Ascending aorta (tissue), 2 donors: ENCODE measurements at regions of chr13 and their contacts with region 1.

Region 1: GRCh38 chr13:32310134-32310706 is 4.9 kb downstream of the ZAR1L start:
- DNase-seq: no peak
- H3K4me3 ChIP-seq: peak overlapping the region; percentile 28 to 63
- H3K27ac ChIP-seq: peak overlapping the region; percentile 3 to 45
- H3K4me1 ChIP-seq: peaks cover 0 to 5% of the 10 kb centered on the region in 2 donors
- H3K27me3 ChIP-seq: no peaks in the 10 kb centered on the region
- CTCF ChIP-seq: peak; percentile 68 to 73 (median 71)

Region 2: DNA sequence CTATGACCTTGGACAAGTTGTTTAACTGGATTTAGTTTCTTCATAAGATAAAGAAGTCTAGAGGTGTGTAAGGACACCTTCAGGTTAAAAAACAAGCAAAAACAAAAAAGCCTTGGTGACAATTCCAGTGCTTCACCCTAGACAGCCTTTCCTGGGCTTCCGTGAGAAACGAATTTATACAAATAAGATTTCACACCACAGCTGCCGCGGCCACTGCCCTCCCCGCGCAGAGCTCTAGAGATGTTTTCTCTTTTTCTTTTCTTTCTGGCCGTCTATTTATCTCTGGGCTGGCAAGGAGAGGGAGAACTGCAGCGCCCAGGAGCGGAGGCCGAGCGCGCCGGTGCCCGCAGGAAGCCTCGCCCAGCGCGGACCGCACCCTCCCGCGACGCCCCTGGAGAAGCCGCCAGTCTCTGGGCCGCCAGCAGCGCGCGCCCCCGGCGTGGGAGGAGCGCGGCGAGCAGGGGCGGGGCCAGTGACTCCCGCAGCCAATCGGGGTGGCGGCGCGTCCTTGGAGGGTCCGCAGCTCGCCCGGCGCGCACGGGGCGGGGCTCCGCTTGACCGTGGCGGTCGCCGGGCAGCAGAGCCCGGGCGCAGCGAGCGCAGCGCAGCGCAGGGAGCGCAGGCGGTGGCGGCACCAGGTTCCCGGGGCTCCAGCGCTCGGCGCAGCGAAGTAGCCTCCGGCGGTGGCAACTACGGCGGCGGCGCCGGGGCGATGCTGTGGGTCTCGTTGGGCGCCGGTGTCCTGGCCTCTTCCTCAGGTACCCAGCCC is 463.9 kb before region 1 on chr13:
- intact Hi-C with region 1: loop called (anchors 5 kb)
- DNase-seq: peak; percentile 60 to 94
- H3K4me3 ChIP-seq: peak overlapping the region; percentile 65 to 97
- H3K27ac ChIP-seq: peak overlapping the region; percentile 89 to 93
- H3K4me1 ChIP-seq: peaks cover 0 to 2% of the 10 kb centered on the region in 2 donors
- H3K27me3 ChIP-seq: no peaks in the 10 kb centered on the region
- CTCF ChIP-seq: no peak

Region 3: DNA sequence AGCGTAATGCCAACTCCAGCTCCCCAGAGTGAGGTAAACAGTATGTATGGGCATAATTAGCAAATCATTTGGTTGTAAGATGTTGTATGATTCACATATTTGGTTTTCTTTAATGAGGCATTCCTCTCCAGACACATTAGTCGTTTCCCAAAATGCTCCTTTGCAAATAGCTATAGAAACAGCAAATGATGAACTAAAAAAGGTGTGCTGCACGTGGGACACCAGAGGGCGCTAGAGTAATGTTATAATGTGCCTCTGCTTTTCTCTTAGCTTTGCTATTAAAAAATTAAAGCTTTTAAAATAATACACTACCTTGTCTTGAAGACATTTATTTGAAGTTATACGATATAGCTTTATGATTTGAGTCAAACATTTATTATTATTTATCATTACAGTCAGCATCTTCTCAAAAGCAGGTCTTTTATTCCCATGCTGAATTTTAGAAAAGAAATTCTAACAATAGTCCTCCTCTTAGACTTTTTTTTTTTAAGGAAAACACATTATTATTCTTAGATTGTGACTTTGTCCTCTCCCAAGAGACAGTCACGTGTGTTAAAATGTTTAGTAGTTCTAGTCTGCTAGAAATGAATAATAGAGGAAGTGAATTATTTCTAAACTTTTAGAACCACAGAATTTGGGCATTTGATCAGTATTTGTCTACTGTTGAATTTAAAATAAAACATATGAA is 400.2 kb before region 1 on chr13:
- intact Hi-C with region 1: loop called (anchors 2 kb)
- DNase-seq: no peak
- H3K4me3 ChIP-seq: no peak overlapping the region
- H3K27ac ChIP-seq: no peak overlapping the region
- H3K4me1 ChIP-seq: peaks cover 0 to 6% of the 10 kb centered on the region in 2 donors
- H3K27me3 ChIP-seq: no peaks in the 10 kb centered on the region
- CTCF ChIP-seq: peak; percentile 66 to 85 (median 81)

Region 4: DNA sequence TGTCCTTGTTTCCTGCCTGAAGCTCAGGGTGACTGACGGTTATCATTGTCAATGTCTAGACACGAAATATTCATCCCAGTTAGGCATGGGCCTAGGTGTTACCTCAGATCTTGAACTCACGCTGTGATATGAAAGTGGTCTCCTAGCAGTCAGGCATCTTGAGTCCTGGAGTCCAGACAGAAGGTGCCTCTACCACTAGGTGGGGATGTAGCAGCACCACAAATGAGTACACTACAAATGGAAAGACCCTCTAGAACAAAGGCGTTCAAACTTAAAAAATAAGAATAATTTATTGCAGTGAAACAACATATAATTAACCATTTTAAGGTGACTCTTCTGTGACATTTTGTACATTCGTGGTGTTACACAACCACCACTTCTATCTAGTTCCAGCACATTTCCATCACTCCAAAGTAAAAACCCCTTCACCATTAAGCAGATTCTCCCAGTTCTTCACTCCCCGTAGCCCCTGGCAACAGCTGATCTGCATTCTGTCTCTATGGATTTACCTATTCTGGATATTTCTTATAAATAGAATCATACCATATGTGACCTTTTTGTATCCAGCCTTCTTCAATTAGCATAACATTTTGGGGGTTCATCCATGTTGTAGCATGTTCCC is 290.5 kb before region 1 on chr13:
- intact Hi-C with region 1: loop called (anchors 5 kb)
- DNase-seq: no peak
- H3K4me3 ChIP-seq: no peak overlapping the region
- H3K27ac ChIP-seq: no peak overlapping the region
- H3K4me1 ChIP-seq: no peaks in the 10 kb centered on the region
- H3K27me3 ChIP-seq: no peaks in the 10 kb centered on the region
- CTCF ChIP-seq: peak; percentile 58 to 80 (median 60)

Region 5: DNA sequence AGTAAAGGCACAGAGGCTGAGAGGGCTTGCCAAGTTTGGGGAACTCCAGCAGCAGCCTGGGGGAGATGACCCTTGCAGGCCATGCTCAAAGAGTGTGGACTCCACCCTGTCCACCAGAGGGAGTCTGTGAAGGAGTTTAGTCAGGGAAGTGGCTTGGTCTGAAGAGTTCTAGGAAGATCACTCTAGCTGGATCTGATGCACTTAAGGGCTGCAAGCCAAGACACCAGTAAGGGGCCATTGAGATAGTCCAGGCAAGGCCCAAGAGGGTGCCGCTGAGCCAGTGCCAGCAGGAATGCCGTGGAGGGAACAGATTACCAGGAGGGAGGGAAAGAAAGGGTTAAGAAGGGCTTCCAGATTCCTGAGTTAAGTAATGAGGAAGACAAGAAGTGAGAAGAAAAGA is 63.8 kb before region 1 on chr13:
- intact Hi-C with region 1: loop called (anchors 2 kb)
- DNase-seq: peak in 1 of 2 donors; percentile 81
- H3K4me3 ChIP-seq: no peak overlapping the region
- H3K27ac ChIP-seq: peak overlapping the region in 1 of 2 donors; percentile 19
- H3K4me1 ChIP-seq: peaks cover 0 to 8% of the 10 kb centered on the region in 2 donors
- H3K27me3 ChIP-seq: no peaks in the 10 kb centered on the region
- CTCF ChIP-seq: peak; percentile 55 to 77 (median 62)

Region 6: DNA sequence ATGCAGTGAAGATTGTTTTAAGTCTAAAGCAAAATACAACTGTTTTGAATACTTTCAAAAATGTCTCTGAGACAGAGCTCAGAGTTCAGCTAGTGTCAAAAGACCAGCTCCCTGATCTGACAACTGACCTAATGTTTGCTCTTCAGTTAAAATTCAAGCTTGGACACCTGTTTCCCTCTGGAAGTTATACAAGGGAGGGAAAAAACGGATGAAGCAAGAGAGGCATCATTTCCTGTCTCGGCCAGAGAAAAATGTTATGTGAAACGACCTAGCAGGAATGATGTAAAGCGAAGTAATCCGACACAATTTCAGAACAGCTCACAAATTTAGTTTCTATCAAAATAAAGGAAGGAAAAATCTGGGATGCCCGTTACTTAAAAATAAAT is 54.5 kb before region 1 on chr13:
- intact Hi-C with region 1: loop called (anchors 2 kb)
- DNase-seq: no peak
- H3K4me3 ChIP-seq: peak overlapping the region; percentile 24 to 68
- H3K27ac ChIP-seq: peak overlapping the region; percentile 79 to 82
- H3K4me1 ChIP-seq: peaks cover 0 to 3% of the 10 kb centered on the region in 2 donors
- H3K27me3 ChIP-seq: no peaks in the 10 kb centered on the region
- CTCF ChIP-seq: no peak